Right cardiac atrium (tissue), 5 donors: ENCODE measurements at regions of chr7 and their contacts with region 1.

Region 1: DNA sequence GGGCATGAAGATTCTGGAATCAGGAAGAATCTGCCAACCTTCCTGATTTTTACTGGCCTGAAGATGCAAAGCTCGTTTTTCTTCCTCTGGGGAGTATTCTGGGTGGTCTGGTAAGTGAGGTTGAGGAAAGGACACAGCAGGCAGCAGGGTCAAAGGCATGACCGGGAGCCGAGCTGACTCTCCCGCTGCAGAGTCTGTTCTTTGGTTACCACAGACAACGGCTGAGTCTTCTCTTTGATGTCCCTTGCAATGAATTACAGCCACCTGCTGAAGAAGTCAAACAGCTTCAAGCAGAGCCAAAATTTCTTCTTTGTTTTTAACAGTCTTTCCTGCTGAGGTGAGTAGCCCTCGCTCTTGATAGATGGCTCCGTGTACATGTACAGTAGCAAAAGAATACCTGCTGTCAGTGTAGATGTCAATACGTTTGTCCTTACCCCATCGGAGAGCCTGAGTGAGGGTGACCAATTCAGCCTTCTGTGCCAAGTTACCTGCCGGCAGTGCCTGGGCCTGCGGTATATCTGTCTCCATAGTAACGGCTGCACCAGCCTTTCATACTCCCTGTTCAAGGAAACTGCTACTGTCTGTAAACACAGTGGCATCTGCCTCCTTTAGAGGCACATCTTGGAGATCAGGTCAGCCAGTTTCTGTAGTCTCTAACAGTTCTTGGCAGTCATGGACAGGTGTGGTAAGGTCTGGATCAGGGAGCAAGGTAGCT is 76.4 kb downstream of the PRR15 start:
- DNase-seq: no peak
- ATAC-seq: no peak
- H3K4me3 ChIP-seq: no peak overlapping the region
- H3K27ac ChIP-seq: no peak overlapping the region
- H3K4me1 ChIP-seq: no peaks in the 10 kb centered on the region
- H3K27me3 ChIP-seq: no peaks in the 10 kb centered on the region

Region 2: DNA sequence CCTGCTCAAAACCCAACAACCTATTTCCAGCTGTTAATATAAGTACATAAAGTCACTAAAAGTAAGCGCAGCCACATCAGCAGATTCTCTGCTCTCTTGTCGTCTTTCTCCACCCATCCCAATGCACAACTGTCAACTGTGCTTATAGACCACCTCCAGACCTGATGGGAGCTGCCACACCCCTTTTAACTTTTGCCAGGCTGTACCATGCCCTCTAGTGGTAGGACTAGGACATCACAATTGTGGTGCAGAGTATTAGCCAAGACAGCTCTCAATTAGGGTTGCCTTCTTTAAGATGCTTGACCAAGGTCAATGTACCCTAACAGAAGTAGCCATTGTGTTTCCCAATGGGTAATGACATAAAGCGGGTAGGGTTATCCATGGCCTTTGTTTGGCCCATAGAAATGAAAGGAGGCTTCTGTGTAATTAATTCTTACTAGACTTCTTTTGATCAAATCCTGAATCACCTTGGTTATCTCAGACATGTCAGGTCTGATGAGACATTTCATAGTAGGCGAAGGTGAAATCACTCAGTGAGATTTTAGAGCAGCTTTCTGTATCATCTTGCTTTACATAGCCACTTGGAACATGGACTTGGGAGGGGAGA is 281.5 kb after region 1 on chr7:
- intact Hi-C with region 1: loop called (anchors 10 kb)
- DNase-seq: no peak
- ATAC-seq: peak; percentile 76 to 90
- H3K4me3 ChIP-seq: no peak overlapping the region
- H3K27ac ChIP-seq: no peak overlapping the region
- H3K4me1 ChIP-seq: no peaks in the 10 kb centered on the region
- H3K27me3 ChIP-seq: no peaks in the 10 kb centered on the region